ENCODE measurements at regions of chr6 and their contacts with region 1.

Region 1: DNA sequence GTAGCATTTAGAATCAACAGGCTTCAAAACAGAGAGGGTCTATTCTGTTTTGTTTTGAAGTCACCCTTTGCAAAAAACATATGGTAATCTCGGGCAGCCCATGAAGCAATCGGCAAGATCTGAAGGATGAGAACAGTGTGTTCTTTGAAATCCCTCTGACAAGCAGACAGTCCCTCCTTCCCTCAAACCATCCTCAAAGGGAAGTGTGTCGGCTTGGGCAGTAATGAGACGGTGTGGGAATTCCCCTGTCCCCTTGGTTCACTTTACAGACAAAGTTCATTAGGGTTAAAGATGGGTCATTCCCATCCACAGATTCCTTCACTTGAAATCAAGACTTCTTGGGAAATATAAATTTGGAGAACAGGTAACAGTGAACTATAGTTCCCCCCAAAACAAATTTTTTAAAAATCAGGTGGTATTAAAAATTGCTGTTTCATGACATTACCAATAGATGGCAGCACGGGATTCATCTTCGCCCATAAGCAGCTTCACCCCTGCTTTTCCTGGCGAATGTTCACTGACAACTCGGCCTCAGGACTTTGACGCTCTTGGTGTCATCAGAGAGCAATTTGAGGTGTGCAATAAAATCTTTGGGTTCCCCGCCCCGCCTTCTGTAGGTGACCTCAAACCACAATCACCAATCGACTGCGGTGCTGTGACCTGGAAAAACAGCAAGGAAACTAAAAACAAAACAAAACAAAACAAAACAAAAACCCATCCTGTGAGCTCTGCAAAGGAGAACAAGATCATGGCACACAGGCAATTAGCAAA is 159.3 kb upstream of the TNFAIP3 start:
- DNase-seq: peak; percentile 27
- ATAC-seq: peak; percentile 75
- H3K4me3 Mint-ChIP-seq: peak overlapping the region; percentile 57
- H3K27ac Mint-ChIP-seq: peak overlapping the region; percentile 85
- H3K4me1 Mint-ChIP-seq: peaks cover 59% of the 10 kb centered on the region
- H3K27me3 Mint-ChIP-seq: no peaks in the 10 kb centered on the region
- CTCF ChIP-seq: peak; percentile 38

Region 2: DNA sequence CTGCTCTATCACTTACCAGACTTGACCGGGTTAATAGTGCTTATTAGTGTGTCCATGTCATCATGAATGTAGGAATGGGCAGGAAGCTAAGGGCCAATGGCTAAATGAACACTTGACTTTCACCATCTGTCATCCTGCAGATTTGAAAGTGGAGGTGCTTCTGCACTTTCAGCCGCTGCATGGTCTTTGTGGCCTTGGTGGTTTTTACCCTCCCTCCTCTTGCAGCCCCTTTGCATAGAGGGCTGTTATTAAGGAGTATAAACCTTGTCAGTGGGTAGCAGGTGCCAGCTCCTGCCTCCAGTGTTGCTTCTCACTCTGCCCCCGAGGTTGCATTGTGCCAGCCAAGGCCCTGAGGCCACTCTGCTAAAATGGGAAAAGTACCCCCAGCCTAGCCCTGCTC is 37.1 kb after region 1 on chr6:
- CTCF ChIA-PET with region 1: interaction called, 3 read pairs
- POLR2A ChIA-PET with region 1: no interaction called
- intact Hi-C with region 1: loop called (anchors 5 kb)
- DNase-seq: no peak
- ATAC-seq: no peak
- H3K4me3 Mint-ChIP-seq: no peak overlapping the region
- H3K27ac Mint-ChIP-seq: no peak overlapping the region
- H3K4me1 Mint-ChIP-seq: peaks cover 36% of the 10 kb centered on the region
- H3K27me3 Mint-ChIP-seq: no peaks in the 10 kb centered on the region
- CTCF ChIP-seq: no peak

Region 3: GRCh38 chr6:137873273-137873762 is 165.5 kb after region 1 on chr6:
- CTCF ChIA-PET with region 1: interaction called, 41 read pairs
- POLR2A ChIA-PET with region 1: interaction called, 42 read pairs
- intact Hi-C with region 1: loop called (anchors 1 kb)
- DNase-seq: peak; percentile 50
- ATAC-seq: peak; percentile 84
- H3K4me3 Mint-ChIP-seq: peak overlapping the region; percentile 96
- H3K27ac Mint-ChIP-seq: peak overlapping the region; percentile 94
- H3K4me1 Mint-ChIP-seq: peaks cover 80% of the 10 kb centered on the region
- H3K27me3 Mint-ChIP-seq: no peaks in the 10 kb centered on the region
- CTCF ChIP-seq: no peak

Region 4: GRCh38 chr6:137975188-137975940 is 267.6 kb after region 1 on chr6:
- CTCF ChIA-PET with region 1: interaction called, 20 read pairs
- POLR2A ChIA-PET with region 1: no interaction called
- intact Hi-C with region 1: loop called (anchors 1 kb)
- DNase-seq: no peak
- ATAC-seq: peak; percentile 40
- H3K4me3 Mint-ChIP-seq: peak overlapping the region; percentile 8
- H3K27ac Mint-ChIP-seq: peak overlapping the region; percentile 65
- H3K4me1 Mint-ChIP-seq: peaks cover 17% of the 10 kb centered on the region
- H3K27me3 Mint-ChIP-seq: no peaks in the 10 kb centered on the region
- CTCF ChIP-seq: no peak

Region 5: DNA sequence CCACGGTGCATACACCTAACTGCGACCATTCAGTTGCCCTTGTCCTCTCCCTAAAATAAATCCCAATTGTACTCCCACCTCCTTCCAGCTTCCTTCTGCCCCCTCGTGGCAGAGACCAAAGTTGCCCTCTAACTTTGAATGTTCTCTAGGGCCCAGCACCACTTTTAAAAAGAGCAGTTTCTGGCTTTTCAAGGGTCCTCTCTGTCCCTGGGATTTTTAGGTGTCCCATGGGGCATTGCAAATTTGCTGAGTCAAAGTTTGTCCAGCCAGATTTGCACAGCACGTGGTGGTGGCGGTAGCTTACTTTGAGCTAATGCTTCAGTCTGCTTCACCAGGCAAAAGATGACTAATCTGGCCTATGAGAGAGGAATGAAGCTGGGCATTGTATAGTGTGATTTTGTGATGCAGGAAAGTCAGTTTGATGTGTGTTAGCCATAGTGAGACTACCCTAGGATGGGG is 299.3 kb after region 1 on chr6:
- CTCF ChIA-PET with region 1: interaction called, 14 read pairs
- POLR2A ChIA-PET with region 1: no interaction called
- intact Hi-C with region 1: loop called (anchors 1 kb)
- DNase-seq: no peak
- ATAC-seq: no peak
- H3K4me3 Mint-ChIP-seq: no peak overlapping the region
- H3K27ac Mint-ChIP-seq: no peak overlapping the region
- H3K4me1 Mint-ChIP-seq: peaks cover under 1% of the 10 kb centered on the region
- H3K27me3 Mint-ChIP-seq: peaks cover 5% of the 10 kb centered on the region
- CTCF ChIP-seq: no peak

Region 6: DNA sequence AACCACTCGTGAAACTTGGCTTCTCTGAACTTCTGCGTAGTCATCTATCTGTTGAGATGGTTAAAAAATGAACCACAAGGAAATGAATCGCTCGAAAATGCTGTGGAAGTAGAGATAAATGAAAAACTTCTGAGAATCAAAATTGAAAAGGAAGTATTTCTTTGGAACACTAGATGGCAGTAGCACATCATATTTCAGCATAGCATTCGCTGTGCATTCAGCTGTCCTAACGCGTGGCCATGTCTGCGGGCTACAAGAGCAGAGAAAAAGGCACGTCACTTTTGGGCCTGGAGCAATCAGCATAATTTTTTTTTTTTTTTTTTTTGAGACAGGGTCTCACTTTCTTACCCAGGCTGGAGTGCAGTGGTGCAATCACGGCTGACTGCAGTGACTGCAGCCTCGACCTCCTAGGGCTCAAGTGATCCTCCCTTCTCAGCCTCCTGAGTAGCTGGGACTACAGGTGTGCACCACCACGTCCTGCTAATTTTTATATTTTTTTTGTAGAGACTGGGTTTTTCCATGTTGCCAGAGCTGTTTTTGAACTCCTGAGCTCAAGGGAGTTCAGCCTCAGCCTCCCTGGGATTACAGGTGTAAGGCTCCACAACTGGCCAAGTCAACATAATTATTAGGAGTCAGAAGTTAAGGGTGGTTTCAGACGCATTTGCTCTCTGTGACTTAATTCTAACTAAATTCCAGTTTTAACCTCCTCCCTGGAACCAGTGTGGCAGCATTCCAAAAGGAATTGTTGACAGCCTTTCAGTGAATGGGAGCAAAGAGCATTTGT is 408.3 kb after region 1 on chr6:
- CTCF ChIA-PET with region 1: no interaction called
- POLR2A ChIA-PET with region 1: no interaction called
- intact Hi-C with region 1: no loop called
- DNase-seq: no peak
- ATAC-seq: peak; percentile 85
- H3K4me3 Mint-ChIP-seq: no peak overlapping the region
- H3K27ac Mint-ChIP-seq: no peak overlapping the region
- H3K4me1 Mint-ChIP-seq: peaks cover 6% of the 10 kb centered on the region
- H3K27me3 Mint-ChIP-seq: peaks cover 26% of the 10 kb centered on the region
- CTCF ChIP-seq: peak; percentile 61

Measured in activated B cell treated with CpG ODN at 0.5 μM for 24 hours (primary cell).